ENCODE measurements at regions of chr7 and their contacts with region 1.

Region 1: GRCh38 chr7:77351539-77352004 is 64.6 kb downstream of the GSAP start:
- DNase-seq: peak; percentile 67
- H3K4me3 Mint-ChIP-seq: peak overlapping the region; percentile 63
- H3K27ac Mint-ChIP-seq: peak overlapping the region; percentile 86
- H3K4me1 Mint-ChIP-seq: peaks cover 61% of the 10 kb centered on the region
- H3K27me3 Mint-ChIP-seq: peaks cover 14% of the 10 kb centered on the region

Region 2: GRCh38 chr7:77269360-77270093 is 82.0 kb before region 1 on chr7:
- intact Hi-C with region 1: loop called (anchors 2 kb)
- DNase-seq: no peak
- H3K4me3 Mint-ChIP-seq: no peak overlapping the region
- H3K27ac Mint-ChIP-seq: no peak overlapping the region
- H3K4me1 Mint-ChIP-seq: peaks cover 26% of the 10 kb centered on the region
- H3K27me3 Mint-ChIP-seq: peaks cover 3% of the 10 kb centered on the region

Region 3: DNA sequence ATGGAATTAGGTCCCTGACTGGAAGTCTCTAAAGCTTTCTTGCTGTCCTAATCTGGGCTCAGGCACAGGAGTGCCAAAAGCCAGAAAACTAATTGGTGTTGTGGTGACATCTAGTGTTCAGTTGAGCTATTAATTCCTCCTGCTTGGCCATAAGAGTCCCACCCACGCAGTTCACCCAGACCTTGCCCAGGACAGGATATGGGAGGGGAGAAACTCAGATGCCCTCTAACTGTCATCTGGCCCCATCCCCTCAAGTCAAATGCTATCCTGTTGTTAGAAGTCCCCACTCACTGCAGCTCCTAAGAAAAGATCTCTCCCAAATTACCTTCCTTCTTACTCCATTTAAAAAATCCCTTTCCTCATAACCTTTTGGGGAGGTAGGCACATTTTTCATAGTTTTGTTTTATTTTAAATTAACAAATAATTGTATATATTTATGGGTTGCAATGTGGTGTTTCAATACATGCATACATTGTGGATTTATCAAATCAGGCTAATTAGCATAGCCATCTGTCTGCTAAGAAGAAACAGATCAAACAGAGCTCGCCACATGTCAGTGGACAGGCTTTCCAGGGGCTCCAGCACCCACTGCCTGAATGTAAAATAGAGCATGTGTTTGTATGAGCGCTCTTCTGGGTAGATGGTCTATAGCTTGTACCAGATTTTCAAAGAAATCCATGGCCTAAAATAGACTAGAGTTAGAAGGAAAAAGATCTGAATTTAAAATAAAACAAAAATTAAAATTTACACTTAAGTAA is 19.5 kb before region 1 on chr7:
- intact Hi-C with region 1: loop called (anchors 1 kb)
- DNase-seq: peak; percentile 31
- H3K4me3 Mint-ChIP-seq: no peak overlapping the region
- H3K27ac Mint-ChIP-seq: no peak overlapping the region
- H3K4me1 Mint-ChIP-seq: peaks cover 38% of the 10 kb centered on the region
- H3K27me3 Mint-ChIP-seq: no peaks in the 10 kb centered on the region

Region 4: GRCh38 chr7:77393269-77393668 is 41.7 kb after region 1 on chr7:
- intact Hi-C with region 1: loop called (anchors 2 kb)
- DNase-seq: peak; percentile 14
- H3K4me3 Mint-ChIP-seq: no peak overlapping the region
- H3K27ac Mint-ChIP-seq: no peak overlapping the region
- H3K4me1 Mint-ChIP-seq: peaks cover 9% of the 10 kb centered on the region
- H3K27me3 Mint-ChIP-seq: no peaks in the 10 kb centered on the region

Region 5: GRCh38 chr7:77415823-77416622 is 64.5 kb after region 1 on chr7 and contains the start of gene GSAP:
- intact Hi-C with region 1: loop called (anchors 1 kb)
- DNase-seq: peak; percentile 29
- H3K4me3 Mint-ChIP-seq: peak within 1 kb of the TSS; percentile 45
- H3K27ac Mint-ChIP-seq: no peak within 1 kb of the TSS
- H3K4me1 Mint-ChIP-seq: peaks cover 25% of the 10 kb centered on the region
- H3K27me3 Mint-ChIP-seq: peaks cover 36% of the 10 kb centered on the region
- total RNA-seq, gene GSAP: 0.43 and 0.90 TPM in 2 replicates

Region 6: GRCh38 chr7:77450054-77450453 is 98.5 kb after region 1 on chr7:
- intact Hi-C with region 1: no loop called
- DNase-seq: no peak
- H3K4me3 Mint-ChIP-seq: no peak overlapping the region
- H3K27ac Mint-ChIP-seq: no peak overlapping the region
- H3K4me1 Mint-ChIP-seq: peaks cover 2% of the 10 kb centered on the region
- H3K27me3 Mint-ChIP-seq: peaks cover 16% of the 10 kb centered on the region

Region 7: GRCh38 chr7:77460057-77460486 is 108.5 kb after region 1 on chr7:
- intact Hi-C with region 1: loop called (anchors 10 kb)
- DNase-seq: no peak
- H3K4me3 Mint-ChIP-seq: no peak overlapping the region
- H3K27ac Mint-ChIP-seq: no peak overlapping the region
- H3K4me1 Mint-ChIP-seq: peaks cover 12% of the 10 kb centered on the region
- H3K27me3 Mint-ChIP-seq: peaks cover 26% of the 10 kb centered on the region

Region 8: DNA sequence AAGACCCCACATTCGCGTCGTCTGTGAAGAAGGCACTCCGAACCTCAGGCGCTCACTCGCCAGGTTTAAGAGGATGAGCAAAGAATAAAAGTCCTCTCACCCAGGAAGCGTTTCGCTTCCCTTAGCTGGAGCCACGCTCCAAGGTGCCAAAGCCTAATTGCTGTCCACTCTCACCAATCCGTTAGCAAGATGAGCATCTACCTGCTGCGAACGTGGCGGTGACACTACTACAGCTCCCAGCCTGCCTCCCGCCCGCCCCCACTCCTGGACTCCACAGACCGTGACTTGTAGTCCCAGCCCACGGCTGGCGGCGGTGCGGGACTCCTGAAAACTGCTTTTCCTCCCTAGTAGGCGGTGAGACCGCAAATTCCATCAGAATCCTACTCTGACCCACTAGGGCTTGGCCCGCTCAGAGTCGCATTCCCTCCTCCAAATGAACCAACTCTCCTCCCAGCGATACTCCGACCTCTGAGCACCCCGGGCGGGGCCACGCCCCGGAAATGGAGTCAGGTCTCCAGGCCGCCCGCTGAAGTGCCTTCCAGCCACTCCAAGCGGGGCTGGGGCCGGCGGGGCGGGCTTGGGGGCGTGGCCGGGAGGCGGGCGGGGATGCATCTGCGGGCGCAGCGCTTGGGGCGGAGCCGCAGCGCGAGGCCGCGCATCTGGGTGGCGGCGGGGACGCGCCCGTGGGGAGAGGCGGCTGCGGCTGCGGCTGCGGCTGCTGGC is 185.0 kb after region 1 on chr7:
- intact Hi-C with region 1: loop called (anchors 2 kb)
- DNase-seq: peak; percentile 93
- H3K4me3 Mint-ChIP-seq: peak overlapping the region; percentile 87
- H3K27ac Mint-ChIP-seq: peak overlapping the region; percentile 70
- H3K4me1 Mint-ChIP-seq: peaks cover 14% of the 10 kb centered on the region
- H3K27me3 Mint-ChIP-seq: no peaks in the 10 kb centered on the region

Region 9: GRCh38 chr7:78164459-78164858 is 812.9 kb after region 1 on chr7:
- intact Hi-C with region 1: no loop called
- DNase-seq: no peak
- H3K4me3 Mint-ChIP-seq: no peak overlapping the region
- H3K27ac Mint-ChIP-seq: no peak overlapping the region
- H3K4me1 Mint-ChIP-seq: no peaks in the 10 kb centered on the region
- H3K27me3 Mint-ChIP-seq: no peaks in the 10 kb centered on the region

Measured in activated T-helper 2 cell treated with anti-CD3 and anti-CD28 coated beads, Interferon-gamma antibody, Interleukin-2, Interleukin-4, amounts not matched to agents 10 μg/mL and 5 μg/mL and 100 μg/mL, durations not matched to agents 14 hours and 24 hours and 36 hours (primary cell).